ENCODE measurements at regions of chr4 and their contacts with region 1.

Region 1: GRCh38 chr4:15729910-15730533 is 27.2 kb downstream of the BST1 start:
- DNase-seq: peak; percentile 53
- ATAC-seq: peak; percentile 88
- H3K4me3 ChIP-seq: no peak overlapping the region
- H3K27ac ChIP-seq: no peak overlapping the region
- H3K4me1 ChIP-seq: 0 out of 2 replicates have a peak, but pooled peaks cover 2% of the 10 kb centered on the region
- H3K27me3 ChIP-seq: no peaks in the 10 kb centered on the region
- CTCF ChIP-seq: peak; percentile 83
- POLR2A ChIP-seq: no peak
- RAD21 ChIP-seq: peak; percentile 69

Region 2: DNA sequence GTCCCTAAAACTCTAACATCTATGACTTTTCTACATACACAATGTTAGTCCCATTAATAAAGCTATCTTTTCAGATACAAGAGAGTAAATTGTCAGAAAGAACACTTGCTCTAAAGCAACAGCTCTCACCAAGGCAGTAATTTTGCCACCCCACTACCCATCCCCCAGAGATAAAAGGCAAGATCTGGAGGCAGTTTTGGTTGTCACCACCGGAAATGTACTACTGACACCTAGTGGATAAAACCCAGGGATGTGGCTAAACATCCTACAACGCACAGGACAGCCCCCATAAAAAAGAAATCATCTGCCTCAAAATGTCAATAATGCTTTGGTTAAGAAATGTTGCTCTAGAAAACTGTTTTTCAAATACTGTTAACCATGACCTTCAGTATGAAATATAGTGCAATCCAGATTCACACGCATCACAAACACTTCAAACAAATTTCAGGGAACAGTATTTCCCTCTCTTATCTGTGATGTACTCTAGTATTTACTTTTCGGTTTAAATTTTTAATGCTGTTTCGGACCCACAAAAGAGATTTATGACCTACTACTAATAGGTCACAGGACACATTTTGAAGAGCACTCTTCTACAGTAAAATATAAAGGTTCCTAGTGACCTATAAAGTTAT is 80.0 kb before region 1 on chr4:
- CTCF ChIA-PET with region 1: no interaction called
- POLR2A ChIA-PET with region 1: interaction called, 5 read pairs
- dilution Hi-C with region 1: no loop called
- in situ Hi-C with region 1: no loop called
- intact Hi-C with region 1: loop called (anchors 5 kb)
- DNase-seq: peak; percentile 63
- ATAC-seq: peak; percentile 25; the same call in 1 of the 2 replicates
- H3K4me3 ChIP-seq: no peak overlapping the region
- H3K27ac ChIP-seq: no peak overlapping the region
- H3K4me1 ChIP-seq: no peaks in the 10 kb centered on the region; the same call in 1 of the 2 replicates
- H3K27me3 ChIP-seq: no peaks in the 10 kb centered on the region
- CTCF ChIP-seq: peak; percentile 75
- POLR2A ChIP-seq: no peak
- RAD21 ChIP-seq: peak; percentile 76

Region 3: DNA sequence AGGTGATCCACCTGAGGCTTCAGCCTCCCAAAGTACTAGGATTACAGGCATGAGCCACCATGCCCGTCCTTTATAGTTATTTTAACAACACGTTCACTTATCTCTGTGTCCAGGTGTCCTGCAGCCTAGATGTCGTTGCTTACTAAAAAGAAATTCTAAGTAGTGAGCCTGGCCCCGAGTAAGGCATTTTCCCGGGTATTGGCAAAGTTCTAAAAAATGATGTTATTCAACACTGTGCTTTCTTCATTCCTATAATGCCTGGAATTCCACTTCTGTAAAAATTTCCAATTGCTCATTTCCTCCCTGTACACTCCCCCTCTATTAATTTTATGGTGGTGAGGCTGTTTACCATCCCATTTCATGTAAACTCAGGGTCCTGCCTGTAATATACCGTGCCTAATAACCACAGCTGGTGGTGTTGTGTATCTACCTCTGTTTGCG is 13.0 kb before region 1 on chr4:
- CTCF ChIA-PET with region 1: no interaction called
- POLR2A ChIA-PET with region 1: interaction called, 12 read pairs
- dilution Hi-C with region 1: no loop called
- in situ Hi-C with region 1: no loop called
- intact Hi-C with region 1: no loop called
- DNase-seq: peak; percentile 59
- ATAC-seq: peak; percentile 82
- H3K4me3 ChIP-seq: no peak overlapping the region
- H3K27ac ChIP-seq: peak overlapping the region; percentile 64; the same call in 1 of the 2 replicates
- H3K4me1 ChIP-seq: peaks cover 18% of the 10 kb centered on the region
- H3K27me3 ChIP-seq: no peaks in the 10 kb centered on the region
- CTCF ChIP-seq: no peak
- POLR2A ChIP-seq: no peak
- RAD21 ChIP-seq: no peak

Region 4: GRCh38 chr4:15756361-15756861 is 26.4 kb after region 1 on chr4:
- CTCF ChIA-PET with region 1: no interaction called
- POLR2A ChIA-PET with region 1: no interaction called
- dilution Hi-C with region 1: no loop called
- in situ Hi-C with region 1: no loop called
- intact Hi-C with region 1: no loop called
- DNase-seq: peak; percentile 26
- ATAC-seq: no peak
- H3K4me3 ChIP-seq: no peak overlapping the region
- H3K27ac ChIP-seq: no peak overlapping the region
- H3K4me1 ChIP-seq: no peaks in the 10 kb centered on the region; the same call in 1 of the 2 replicates
- H3K27me3 ChIP-seq: no peaks in the 10 kb centered on the region; the same call in 1 of the 2 replicates
- CTCF ChIP-seq: peak; percentile 29; the same call in 1 of the 2 replicates
- POLR2A ChIP-seq: no peak
- RAD21 ChIP-seq: 0 out of 2 replicates have a peak, but pooled peaks have one; percentile 7

Region 5: DNA sequence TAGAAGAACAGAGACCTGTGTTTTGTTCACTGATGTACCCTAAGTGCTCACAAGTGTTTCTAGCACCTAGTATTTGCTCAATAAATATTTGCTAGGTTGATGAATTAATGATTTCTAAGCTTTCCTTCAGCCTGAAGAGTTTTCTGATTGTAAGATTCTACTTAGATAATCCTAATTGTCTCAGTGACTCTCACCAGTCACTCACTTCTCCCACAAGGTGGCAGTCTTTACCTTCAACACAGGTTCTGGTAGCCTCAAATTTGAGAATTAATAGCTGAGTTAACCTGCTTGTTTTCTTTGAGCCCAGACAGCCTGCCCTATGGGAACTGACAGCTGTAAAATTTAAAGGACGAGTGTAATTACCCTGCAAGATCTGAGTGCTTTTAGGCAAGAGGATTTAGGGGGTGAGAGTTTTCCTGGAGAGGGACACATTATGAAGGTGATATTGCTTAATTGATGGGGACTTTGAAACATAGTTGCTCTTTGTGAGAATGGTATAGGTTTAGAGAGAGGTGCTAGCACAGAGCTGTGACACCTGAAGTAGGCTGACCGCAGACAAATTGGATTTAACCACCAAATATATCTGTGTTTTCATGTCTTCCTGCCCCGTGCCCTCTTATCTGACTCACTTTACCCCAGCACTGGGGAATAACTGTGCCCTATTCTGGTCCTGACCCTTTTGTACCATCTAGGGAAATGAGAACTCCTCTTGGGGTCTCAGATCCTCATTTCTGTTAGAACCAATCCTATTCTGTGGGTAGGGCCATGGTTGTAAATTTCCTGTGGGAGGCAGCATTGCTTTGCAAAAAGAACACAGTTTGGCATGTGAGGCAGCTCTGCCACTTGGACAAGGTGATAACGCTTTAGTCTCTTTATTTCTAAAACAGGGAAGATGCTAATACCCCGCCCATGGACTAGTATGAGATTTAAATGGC is 75.8 kb after region 1 on chr4:
- CTCF ChIA-PET with region 1: no interaction called
- POLR2A ChIA-PET with region 1: no interaction called
- dilution Hi-C with region 1: no loop called
- in situ Hi-C with region 1: no loop called
- intact Hi-C with region 1: loop called (anchors 1 kb)
- DNase-seq: peak; percentile 63
- ATAC-seq: peak; percentile 84
- H3K4me3 ChIP-seq: no peak overlapping the region
- H3K27ac ChIP-seq: no peak overlapping the region
- H3K4me1 ChIP-seq: no peaks in the 10 kb centered on the region
- H3K27me3 ChIP-seq: peaks cover 27% of the 10 kb centered on the region
- CTCF ChIP-seq: peak; percentile 83
- POLR2A ChIP-seq: no peak
- RAD21 ChIP-seq: peak; percentile 84

Region 6: DNA sequence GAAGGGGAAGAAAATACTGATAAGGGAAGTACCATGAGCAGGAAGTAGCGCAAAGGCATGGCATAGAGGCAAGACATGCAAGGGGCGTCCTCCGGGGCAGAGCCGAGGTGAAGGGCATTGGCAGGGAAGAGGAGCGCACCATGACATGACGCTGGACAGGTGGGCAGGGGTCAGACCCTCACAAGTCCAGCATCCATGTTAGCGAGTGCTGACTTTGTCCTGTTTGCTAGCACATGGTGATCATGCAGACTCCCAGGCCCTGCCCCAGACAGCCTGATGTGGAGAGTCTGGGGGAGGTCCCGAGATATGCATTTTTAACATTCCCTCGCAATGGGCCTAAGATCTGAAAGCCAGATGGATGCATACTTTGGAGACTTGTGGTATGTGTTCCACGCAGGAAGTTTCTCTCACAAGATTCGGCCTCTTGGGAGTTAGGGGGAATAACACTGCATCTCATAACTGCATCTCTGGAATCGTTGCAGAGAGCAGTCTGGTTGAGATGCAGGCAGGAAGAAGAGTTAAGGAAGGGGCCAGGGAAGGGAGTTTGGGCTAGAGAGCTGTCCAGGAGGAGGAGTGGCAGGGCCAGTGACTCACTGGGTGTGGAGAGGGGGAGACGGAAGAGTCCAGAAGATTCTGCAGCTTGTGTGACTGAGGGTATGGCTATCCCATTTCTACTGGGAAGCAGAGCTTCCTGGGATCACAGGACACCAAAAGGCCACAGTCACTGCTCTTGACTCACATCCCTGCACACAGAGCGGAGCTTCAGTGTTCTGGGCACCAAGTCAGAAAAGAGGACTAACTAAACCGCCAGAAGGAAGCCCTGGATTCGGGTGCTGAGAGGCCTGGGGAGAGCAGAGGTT is 1991.7 kb after region 1 on chr4:
- CTCF ChIA-PET with region 1: no interaction called
- POLR2A ChIA-PET with region 1: no interaction called
- dilution Hi-C with region 1: no loop called
- in situ Hi-C with region 1: no loop called
- intact Hi-C with region 1: no loop called
- DNase-seq: peak; percentile 23
- ATAC-seq: peak; percentile 72
- H3K4me3 ChIP-seq: no peak overlapping the region
- H3K27ac ChIP-seq: no peak overlapping the region
- H3K4me1 ChIP-seq: no peaks in the 10 kb centered on the region
- H3K27me3 ChIP-seq: no peaks in the 10 kb centered on the region
- CTCF ChIP-seq: no peak
- POLR2A ChIP-seq: no peak
- RAD21 ChIP-seq: no peak

Measured in IMR-90 (cell line).